MCF 10A (cell line): ENCODE measurements at regions of chr5 and their contacts with region 1.

Region 1: GRCh38 chr5:134873987-134874830 is at the start of gene TXNDC15:
- DNase-seq: peak; percentile 87
- H3K4me3 Mint-ChIP-seq: peak within 1 kb of the TSS; percentile 98
- H3K27ac Mint-ChIP-seq: peak within 1 kb of the TSS; percentile 97
- H3K4me1 Mint-ChIP-seq: peaks cover 28% of the 10 kb centered on the region
- H3K27me3 Mint-ChIP-seq: no peaks in the 10 kb centered on the region
- CTCF ChIP-seq: no peak
- total RNA-seq, gene TXNDC15: 57.0 and 66.0 TPM in 2 replicates

Region 2: GRCh38 chr5:134887593-134888159 is 13.5 kb after region 1 on chr5:
- CTCF ChIA-PET with region 1: interaction called, 6 read pairs
- POLR2A ChIA-PET with region 1: interaction called, 16 read pairs
- intact Hi-C with region 1: no loop called
- DNase-seq: no peak
- H3K4me3 Mint-ChIP-seq: no peak overlapping the region
- H3K27ac Mint-ChIP-seq: no peak overlapping the region
- H3K4me1 Mint-ChIP-seq: no peaks in the 10 kb centered on the region
- H3K27me3 Mint-ChIP-seq: no peaks in the 10 kb centered on the region
- CTCF ChIP-seq: no peak